ENCODE measurements at regions of chr6 and their contacts with region 1.

Region 1: DNA sequence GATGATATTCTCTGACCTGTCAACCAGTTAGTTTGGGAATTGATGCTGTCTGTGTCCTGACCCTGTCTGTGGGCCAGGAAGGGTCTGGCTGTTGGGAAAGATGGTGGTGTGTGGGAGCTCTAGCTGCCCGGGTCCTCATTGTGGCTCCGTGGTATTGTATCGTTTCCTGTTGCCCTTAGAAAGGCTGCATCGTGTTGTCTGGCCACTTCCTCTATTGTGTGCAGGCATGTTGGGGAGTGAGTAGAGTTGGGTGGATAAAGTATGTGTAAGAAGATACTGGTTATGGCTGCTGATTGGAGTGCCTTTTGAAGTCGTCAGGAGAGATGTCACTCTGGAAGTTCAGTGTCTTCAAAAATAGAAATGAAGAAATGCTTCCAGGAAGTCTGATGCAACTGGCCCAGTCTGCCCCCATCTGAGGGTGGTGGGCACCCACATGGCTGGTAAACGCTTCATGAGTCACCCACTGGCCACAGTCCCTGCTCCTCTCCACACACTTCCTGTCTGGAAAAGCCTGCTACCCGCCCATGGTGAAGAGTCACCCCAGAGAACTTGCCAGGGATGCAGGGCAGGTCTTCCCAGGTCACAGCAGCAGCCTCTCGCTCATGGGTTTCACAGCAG is 27.9 kb downstream of the PPARD start:
- DNase-seq: peak; percentile 65
- ATAC-seq: peak; percentile 6; the same call in 1 of the 3 replicates
- H3K4me3 ChIP-seq: no peak overlapping the region
- H3K27ac ChIP-seq: peak overlapping the region; percentile 84
- H3K4me1 ChIP-seq: peaks cover 78% of the 10 kb centered on the region
- H3K27me3 ChIP-seq: no peaks in the 10 kb centered on the region
- CTCF ChIP-seq: no peak
- EP300 ChIP-seq: peak in 1 of 2 experiments; percentile 55; a peak in 1 of 4 replicates
- POLR2A ChIP-seq: no peak
- RAD21 ChIP-seq: no peak

Region 2: DNA sequence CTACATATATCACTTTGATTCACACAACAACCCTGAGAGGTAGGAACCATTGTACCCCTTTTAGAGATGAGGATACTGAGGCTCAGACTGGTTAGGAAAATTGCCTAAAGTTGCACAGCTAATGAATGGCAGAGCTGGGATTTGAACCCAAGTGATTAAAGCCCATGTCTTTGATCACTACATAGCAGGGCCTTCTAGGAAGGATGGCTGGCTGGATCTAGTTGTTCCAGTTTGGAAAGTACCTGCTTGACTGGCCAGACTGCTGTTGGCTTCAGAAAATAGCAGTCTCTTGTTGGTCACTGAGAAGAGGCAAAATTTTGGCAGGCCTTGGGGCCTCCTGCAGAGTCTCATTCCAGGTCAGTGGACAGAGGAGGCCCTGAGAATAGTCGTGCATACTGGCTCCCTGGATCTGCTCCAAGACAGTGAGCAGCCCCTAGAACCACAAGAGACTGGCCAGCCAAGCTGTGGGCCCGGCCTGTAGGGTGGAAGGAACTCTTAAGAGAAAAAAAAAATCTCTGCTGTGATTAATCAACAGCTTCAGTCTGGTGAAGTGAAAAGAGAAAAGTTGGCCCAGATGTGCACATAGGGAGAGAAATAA is 10.4 kb before region 1 on chr6:
- CTCF ChIA-PET with region 1: no interaction called
- POLR2A ChIA-PET with region 1: interaction called, 13 read pairs
- in situ Hi-C with region 1: no loop called
- intact Hi-C with region 1: loop called (anchors 1 kb)
- DNase-seq: no peak
- ATAC-seq: peak; percentile 35
- H3K4me3 ChIP-seq: no peak overlapping the region
- H3K27ac ChIP-seq: peak overlapping the region; percentile 67
- H3K4me1 ChIP-seq: peaks cover 28% of the 10 kb centered on the region
- H3K27me3 ChIP-seq: no peaks in the 10 kb centered on the region
- CTCF ChIP-seq: no peak
- EP300 ChIP-seq: no peak
- POLR2A ChIP-seq: no peak
- RAD21 ChIP-seq: no peak

Region 3: DNA sequence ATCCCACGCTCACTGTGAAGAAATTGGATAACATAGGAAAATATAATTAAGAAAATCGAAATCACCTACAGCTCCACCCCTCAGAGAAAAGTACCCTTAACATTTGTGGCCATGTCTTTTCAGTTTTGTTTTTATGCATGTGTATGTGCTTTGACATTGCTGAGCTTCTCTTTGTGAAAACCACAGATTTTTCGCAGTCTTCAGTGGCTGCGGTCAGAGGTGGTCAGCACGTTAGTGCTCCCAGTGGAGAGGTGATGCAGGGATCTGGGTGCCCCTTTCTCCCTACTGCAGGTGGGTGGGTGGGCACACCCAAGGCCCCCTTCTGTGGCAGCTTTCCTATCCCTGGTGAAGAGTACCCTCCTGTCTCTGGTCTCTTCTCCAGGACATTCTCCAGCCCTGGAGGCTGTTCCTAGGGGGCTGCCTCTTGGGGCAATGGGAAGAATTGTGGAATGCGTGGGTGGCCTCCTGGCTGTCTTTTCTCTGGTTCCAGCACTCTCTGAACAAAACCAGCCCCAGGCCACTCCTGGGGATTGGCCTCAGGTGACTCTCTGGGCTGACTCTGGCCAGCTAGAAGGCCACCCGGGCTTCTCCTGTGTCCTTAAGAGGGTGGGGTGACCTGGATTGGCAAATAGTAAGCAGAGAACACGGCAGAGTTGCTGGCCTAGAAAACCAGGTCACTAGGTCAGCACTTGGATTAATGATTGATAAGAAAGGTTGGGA is 32.1 kb after region 1 on chr6:
- CTCF ChIA-PET with region 1: no interaction called
- POLR2A ChIA-PET with region 1: interaction called, 3 read pairs
- in situ Hi-C with region 1: no loop called
- intact Hi-C with region 1: loop called (anchors 5 kb)
- DNase-seq: peak; percentile 93
- ATAC-seq: peak; percentile 95
- H3K4me3 ChIP-seq: peak overlapping the region in 1 of 3 experiments; percentile 49; a peak in 2 of 6 replicates
- H3K27ac ChIP-seq: peak overlapping the region; percentile 63
- H3K4me1 ChIP-seq: peaks cover 53% of the 10 kb centered on the region
- H3K27me3 ChIP-seq: no peaks in the 10 kb centered on the region
- CTCF ChIP-seq: 0 out of 2 replicates have a peak, but pooled peaks have one; percentile 7
- EP300 ChIP-seq: peak in 1 of 2 experiments; percentile 85; a peak in 2 of 4 replicates
- POLR2A ChIP-seq: 0 out of 4 replicates have a peak, but pooled peaks of 1 of the 2 experiments have one; percentile 36
- RAD21 ChIP-seq: no peak